ENCODE measurements at regions of chr3 and their contacts with region 1.

Region 1: DNA sequence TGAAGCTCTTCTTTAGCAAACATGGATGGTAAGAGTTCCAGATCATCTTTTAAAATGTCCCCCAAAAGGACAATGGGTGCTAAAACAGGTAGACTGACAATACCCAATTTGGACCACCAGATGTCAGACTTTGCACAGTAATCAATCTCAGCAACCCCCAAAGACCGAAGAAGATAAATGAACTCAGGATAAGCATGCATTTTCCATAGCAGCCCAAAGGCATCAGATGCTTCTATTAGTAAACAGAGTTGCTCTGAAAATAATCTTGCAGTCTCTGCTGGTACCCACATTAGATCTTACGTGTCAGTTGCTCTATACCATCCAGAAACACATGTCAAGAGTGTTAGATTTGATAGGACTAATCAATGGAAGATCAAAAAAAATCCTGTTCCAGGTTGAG is 20.6 kb downstream of the MYH15 start:
- DNase-seq: peak; percentile 28 to 52
- ATAC-seq: peak; percentile 67 to 85
- H3K4me3 ChIP-seq: no peak overlapping the region
- H3K27ac ChIP-seq: no peak overlapping the region
- H3K4me1 ChIP-seq: 0 out of 3 replicates have a peak, but pooled peaks cover 8% of the 10 kb centered on the region
- CTCF ChIP-seq: peak; percentile 87
- EP300 ChIP-seq: no peak
- POLR2A ChIP-seq: no peak
- RAD21 ChIP-seq: peak; percentile 89 to 91

Region 2: GRCh38 chr3:108150200-108150599 is 339.6 kb before region 1 on chr3:
- CTCF ChIA-PET with region 1: no interaction called
- POLR2A ChIA-PET with region 1: no interaction called
- DNase-seq: no peak
- ATAC-seq: no peak
- H3K4me3 ChIP-seq: no peak overlapping the region
- H3K27ac ChIP-seq: no peak overlapping the region
- H3K4me1 ChIP-seq: no peaks in the 10 kb centered on the region
- CTCF ChIP-seq: no peak
- EP300 ChIP-seq: no peak
- POLR2A ChIP-seq: no peak
- RAD21 ChIP-seq: no peak

Region 3: GRCh38 chr3:108477511-108478147 is 12.1 kb before region 1 on chr3:
- CTCF ChIA-PET with region 1: interaction called, 33 read pairs
- POLR2A ChIA-PET with region 1: no interaction called
- DNase-seq: peak; percentile 13 to 72
- ATAC-seq: peak; percentile 52 to 75; a peak in 3 of 6 replicates
- H3K4me3 ChIP-seq: no peak overlapping the region
- H3K27ac ChIP-seq: no peak overlapping the region
- H3K4me1 ChIP-seq: peaks cover 12% of the 10 kb centered on the region
- CTCF ChIP-seq: peak; percentile 82
- EP300 ChIP-seq: no peak
- POLR2A ChIP-seq: no peak
- RAD21 ChIP-seq: peak; percentile 70 to 75

Region 4: DNA sequence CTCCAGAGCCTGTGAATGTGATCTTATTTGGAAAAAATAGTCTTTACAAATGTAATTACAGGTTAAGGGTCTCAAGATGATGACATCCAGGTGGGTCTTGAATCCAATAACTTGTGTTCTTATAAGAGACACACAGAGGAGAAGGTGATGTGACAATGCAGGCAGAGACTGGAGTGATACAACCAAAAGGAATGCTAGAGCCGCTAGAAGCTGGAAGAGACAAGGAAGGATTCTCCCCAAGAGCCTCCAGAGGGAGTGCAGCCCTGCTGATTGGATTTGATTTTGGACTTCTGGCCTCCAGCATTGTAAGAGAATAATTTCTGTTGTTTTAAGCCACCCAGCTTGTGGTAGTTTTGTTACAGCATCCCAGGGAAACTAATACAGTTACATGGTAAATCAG is 11.0 kb after region 1 on chr3:
- CTCF ChIA-PET with region 1: interaction called, 31 read pairs
- POLR2A ChIA-PET with region 1: no interaction called
- DNase-seq: no peak
- ATAC-seq: 0 out of 6 replicates have a peak, but pooled peaks have one; percentile 35 to 54
- H3K4me3 ChIP-seq: no peak overlapping the region
- H3K27ac ChIP-seq: no peak overlapping the region
- H3K4me1 ChIP-seq: no peaks in the 10 kb centered on the region
- CTCF ChIP-seq: no peak
- EP300 ChIP-seq: no peak
- POLR2A ChIP-seq: no peak
- RAD21 ChIP-seq: no peak

Region 5: DNA sequence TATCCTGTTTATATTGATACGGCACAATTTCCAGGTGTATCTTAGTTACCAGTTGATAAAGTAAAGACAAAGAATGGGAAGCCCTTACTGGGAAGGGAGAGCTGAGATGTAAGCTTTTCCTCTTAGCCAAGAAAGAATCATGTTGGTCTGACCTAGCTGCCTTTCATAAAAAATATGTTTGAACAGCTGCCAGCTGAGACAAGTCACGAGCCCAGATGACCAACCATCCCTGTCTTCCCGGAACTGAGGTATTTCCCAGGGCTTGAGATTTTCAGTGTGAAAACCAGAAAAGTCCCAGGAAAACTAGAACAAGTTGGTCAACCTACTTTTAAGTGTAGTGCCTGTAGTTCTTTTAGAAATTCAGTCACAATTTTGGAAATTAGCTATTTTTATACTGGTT is 24.2 kb after region 1 on chr3:
- CTCF ChIA-PET with region 1: interaction called, 13 read pairs
- POLR2A ChIA-PET with region 1: no interaction called
- DNase-seq: no peak
- ATAC-seq: no peak
- H3K4me3 ChIP-seq: no peak overlapping the region
- H3K27ac ChIP-seq: no peak overlapping the region
- H3K4me1 ChIP-seq: no peaks in the 10 kb centered on the region
- CTCF ChIP-seq: no peak
- EP300 ChIP-seq: no peak
- POLR2A ChIP-seq: no peak
- RAD21 ChIP-seq: no peak

Region 6: GRCh38 chr3:108528459-108529252 is 38.9 kb after region 1 on chr3:
- CTCF ChIA-PET with region 1: interaction called, 10 read pairs
- POLR2A ChIA-PET with region 1: no interaction called
- DNase-seq: no peak
- ATAC-seq: no peak
- H3K4me3 ChIP-seq: no peak overlapping the region
- H3K27ac ChIP-seq: no peak overlapping the region
- H3K4me1 ChIP-seq: no peaks in the 10 kb centered on the region
- CTCF ChIP-seq: no peak
- EP300 ChIP-seq: no peak
- POLR2A ChIP-seq: no peak
- RAD21 ChIP-seq: no peak

Region 7: DNA sequence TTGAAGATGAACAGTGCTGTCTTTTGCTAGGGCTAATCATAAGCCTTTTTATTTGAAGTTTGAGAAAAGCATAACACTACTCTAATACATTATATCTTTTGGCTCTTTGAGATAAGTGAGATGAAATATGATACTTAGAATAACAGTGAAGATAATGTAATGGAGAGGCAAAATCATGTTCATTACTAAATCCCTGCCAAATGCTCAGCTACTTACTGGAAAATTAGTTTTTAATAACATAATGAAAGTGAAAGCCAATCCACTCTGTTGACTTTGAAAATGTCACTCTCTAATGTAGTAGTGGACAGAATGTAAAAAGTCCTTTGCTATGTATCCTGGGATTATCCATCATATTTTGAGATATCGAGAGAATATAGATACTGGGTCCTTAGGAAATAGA is 56.5 kb after region 1 on chr3:
- CTCF ChIA-PET with region 1: interaction called, 96 read pairs
- POLR2A ChIA-PET with region 1: no interaction called
- DNase-seq: no peak
- ATAC-seq: no peak
- H3K4me3 ChIP-seq: no peak overlapping the region
- H3K27ac ChIP-seq: no peak overlapping the region
- H3K4me1 ChIP-seq: peaks cover 17% of the 10 kb centered on the region; the same call in 2 of the 3 replicates
- CTCF ChIP-seq: no peak
- EP300 ChIP-seq: no peak
- POLR2A ChIP-seq: no peak
- RAD21 ChIP-seq: no peak

Region 8: GRCh38 chr3:108552267-108553159 is 62.7 kb after region 1 on chr3:
- CTCF ChIA-PET with region 1: interaction called, 96 read pairs
- POLR2A ChIA-PET with region 1: no interaction called
- DNase-seq: peak; percentile 9 to 53
- ATAC-seq: peak; percentile 62 to 79; a peak in 4 of 6 replicates
- H3K4me3 ChIP-seq: no peak overlapping the region
- H3K27ac ChIP-seq: no peak overlapping the region
- H3K4me1 ChIP-seq: peaks cover 40% of the 10 kb centered on the region
- CTCF ChIP-seq: peak; percentile 75
- EP300 ChIP-seq: no peak
- POLR2A ChIP-seq: no peak
- RAD21 ChIP-seq: peak; percentile 55 to 69

Region 9: DNA sequence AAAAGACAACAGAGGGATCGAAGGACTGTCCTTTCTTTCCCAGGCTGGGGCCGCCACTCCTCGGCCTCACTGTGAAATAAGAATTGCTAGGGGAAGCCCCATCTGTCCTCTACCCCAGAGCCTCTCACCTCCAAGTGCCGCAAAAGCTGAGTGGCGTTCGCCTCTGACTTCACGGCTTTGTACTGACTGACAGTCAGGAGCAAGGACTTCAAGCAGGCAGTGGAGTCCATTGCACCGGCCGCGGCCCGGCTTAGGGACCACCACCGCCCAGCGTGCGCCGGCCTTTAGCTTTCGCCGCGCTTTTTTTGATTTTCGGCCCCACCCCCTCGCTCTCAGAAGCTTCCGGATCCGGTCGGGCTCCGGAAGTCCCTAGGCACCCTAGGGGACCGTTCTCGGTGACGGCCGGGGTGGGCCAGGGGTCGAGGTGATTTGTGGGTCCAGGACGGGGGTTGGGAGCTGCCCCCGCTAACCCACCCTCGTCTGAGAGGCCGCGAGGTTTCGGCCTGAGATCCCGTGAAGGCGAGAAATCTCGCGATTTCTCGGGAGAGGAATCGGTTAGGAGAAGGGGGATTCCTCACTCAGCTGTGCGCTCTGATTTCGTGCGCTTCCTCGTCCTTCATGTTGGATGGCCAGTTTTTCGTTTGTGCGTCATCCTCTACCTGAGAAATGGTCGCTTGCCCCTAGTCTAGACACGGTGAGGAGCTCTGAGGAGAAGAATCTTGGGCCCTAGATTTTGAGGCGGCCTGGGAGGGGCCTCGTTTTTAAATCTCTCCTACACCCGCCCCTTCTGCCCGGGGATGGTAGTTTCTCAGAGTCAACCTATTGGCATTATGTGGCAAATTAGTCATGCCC is 99.6 kb after region 1 on chr3 and contains the starts of genes CIP2A and DZIP3:
- CTCF ChIA-PET with region 1: no interaction called
- POLR2A ChIA-PET with region 1: no interaction called
- DNase-seq: peak; percentile 82 to 96
- ATAC-seq: peak; percentile 98 to 99
- H3K4me3 ChIP-seq: peak within 1 kb of the TSS; percentile 69
- H3K27ac ChIP-seq: peak within 1 kb of the TSS; percentile 96 to 97
- H3K4me1 ChIP-seq: peaks cover 16% of the 10 kb centered on the region
- CTCF ChIP-seq: no peak
- EP300 ChIP-seq: no peak
- POLR2A ChIP-seq: peak; percentile 91
- RAD21 ChIP-seq: no peak
- polyA plus RNA-seq, gene CIP2A: 31.8 and 32.6 TPM in 2 replicates
- polyA plus RNA-seq, gene DZIP3: 15.6 and 22.2 TPM in 2 replicates